Calu3 (cell line): ENCODE measurements at regions of chr18 and their contacts with region 1.

Region 1: GRCh38 chr18:27017901-27018500 is 152.5 kb upstream of the AQP4 start:
- DNase-seq: peak; percentile 8
- H3K4me3 Mint-ChIP-seq: no peak overlapping the region
- H3K27ac Mint-ChIP-seq: no peak overlapping the region
- H3K4me1 Mint-ChIP-seq: peaks cover 39% of the 10 kb centered on the region
- H3K27me3 Mint-ChIP-seq: no peaks in the 10 kb centered on the region
- CTCF ChIP-seq: peak; percentile 57

Region 2: GRCh38 chr18:26813043-26813442 is 205.0 kb before region 1 on chr18:
- CTCF ChIA-PET with region 1: no interaction called
- intact Hi-C with region 1: loop called (anchors 5 kb)
- DNase-seq: peak; percentile 54
- H3K4me3 Mint-ChIP-seq: no peak overlapping the region
- H3K27ac Mint-ChIP-seq: no peak overlapping the region
- H3K4me1 Mint-ChIP-seq: peaks cover 30% of the 10 kb centered on the region
- H3K27me3 Mint-ChIP-seq: no peaks in the 10 kb centered on the region
- CTCF ChIP-seq: peak; percentile 61

Region 3: GRCh38 chr18:26827581-26827980 is 190.4 kb before region 1 on chr18:
- CTCF ChIA-PET with region 1: no interaction called
- intact Hi-C with region 1: no loop called
- DNase-seq: no peak
- H3K4me3 Mint-ChIP-seq: no peak overlapping the region
- H3K27ac Mint-ChIP-seq: no peak overlapping the region
- H3K4me1 Mint-ChIP-seq: no peaks in the 10 kb centered on the region
- H3K27me3 Mint-ChIP-seq: peaks cover 23% of the 10 kb centered on the region
- CTCF ChIP-seq: no peak

Region 4: DNA sequence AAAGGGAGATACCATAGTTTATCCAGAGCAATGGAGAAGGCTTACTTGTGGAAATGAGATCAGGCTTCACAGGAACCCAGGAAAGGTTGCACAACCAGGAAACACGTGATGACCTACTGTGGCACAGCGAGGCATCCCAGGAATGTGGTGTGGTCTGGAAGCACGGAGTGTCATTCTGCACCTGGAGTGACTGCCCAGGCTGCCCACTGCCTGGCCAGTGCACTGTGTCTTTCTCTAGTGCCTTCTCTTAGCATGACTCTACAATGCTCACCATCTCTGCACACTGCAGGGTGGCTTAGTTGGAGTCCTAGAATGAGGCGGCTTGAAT is 118.2 kb after region 1 on chr18:
- CTCF ChIA-PET with region 1: no interaction called
- intact Hi-C with region 1: loop called (anchors 5 kb)
- DNase-seq: peak; percentile 86
- H3K4me3 Mint-ChIP-seq: peak overlapping the region; percentile 37
- H3K27ac Mint-ChIP-seq: peak overlapping the region; percentile 68
- H3K4me1 Mint-ChIP-seq: peaks cover 56% of the 10 kb centered on the region
- H3K27me3 Mint-ChIP-seq: no peaks in the 10 kb centered on the region
- CTCF ChIP-seq: no peak

Region 5: GRCh38 chr18:27298214-27298804 is 280.3 kb after region 1 on chr18:
- CTCF ChIA-PET with region 1: interaction called, 9 read pairs
- intact Hi-C with region 1: loop called (anchors 1 kb)
- DNase-seq: no peak
- H3K4me3 Mint-ChIP-seq: no peak overlapping the region
- H3K27ac Mint-ChIP-seq: no peak overlapping the region
- H3K4me1 Mint-ChIP-seq: peaks cover 7% of the 10 kb centered on the region
- H3K27me3 Mint-ChIP-seq: no peaks in the 10 kb centered on the region
- CTCF ChIP-seq: peak; percentile 29

Region 6: GRCh38 chr18:27599202-27599829 is 581.3 kb after region 1 on chr18:
- CTCF ChIA-PET with region 1: no interaction called
- intact Hi-C with region 1: loop called (anchors 5 kb)
- DNase-seq: peak; percentile 70
- H3K4me3 Mint-ChIP-seq: no peak overlapping the region
- H3K27ac Mint-ChIP-seq: no peak overlapping the region
- H3K4me1 Mint-ChIP-seq: peaks cover 3% of the 10 kb centered on the region
- H3K27me3 Mint-ChIP-seq: no peaks in the 10 kb centered on the region
- CTCF ChIP-seq: peak; percentile 82